ENCODE measurements at regions of chr11 and their contacts with region 1.

Region 1: GRCh38 chr11:67420646-67421420 is 5.4 kb downstream of the CARNS1 start:
- DNase-seq: peak; percentile 99
- ATAC-seq: peak; percentile 91
- H3K4me3 Mint-ChIP-seq: peak overlapping the region; percentile 82
- H3K27ac Mint-ChIP-seq: peak overlapping the region; percentile 84
- H3K4me1 Mint-ChIP-seq: peaks cover 48% of the 10 kb centered on the region
- H3K27me3 Mint-ChIP-seq: no peaks in the 10 kb centered on the region
- CTCF ChIP-seq: no peak

Region 2: DNA sequence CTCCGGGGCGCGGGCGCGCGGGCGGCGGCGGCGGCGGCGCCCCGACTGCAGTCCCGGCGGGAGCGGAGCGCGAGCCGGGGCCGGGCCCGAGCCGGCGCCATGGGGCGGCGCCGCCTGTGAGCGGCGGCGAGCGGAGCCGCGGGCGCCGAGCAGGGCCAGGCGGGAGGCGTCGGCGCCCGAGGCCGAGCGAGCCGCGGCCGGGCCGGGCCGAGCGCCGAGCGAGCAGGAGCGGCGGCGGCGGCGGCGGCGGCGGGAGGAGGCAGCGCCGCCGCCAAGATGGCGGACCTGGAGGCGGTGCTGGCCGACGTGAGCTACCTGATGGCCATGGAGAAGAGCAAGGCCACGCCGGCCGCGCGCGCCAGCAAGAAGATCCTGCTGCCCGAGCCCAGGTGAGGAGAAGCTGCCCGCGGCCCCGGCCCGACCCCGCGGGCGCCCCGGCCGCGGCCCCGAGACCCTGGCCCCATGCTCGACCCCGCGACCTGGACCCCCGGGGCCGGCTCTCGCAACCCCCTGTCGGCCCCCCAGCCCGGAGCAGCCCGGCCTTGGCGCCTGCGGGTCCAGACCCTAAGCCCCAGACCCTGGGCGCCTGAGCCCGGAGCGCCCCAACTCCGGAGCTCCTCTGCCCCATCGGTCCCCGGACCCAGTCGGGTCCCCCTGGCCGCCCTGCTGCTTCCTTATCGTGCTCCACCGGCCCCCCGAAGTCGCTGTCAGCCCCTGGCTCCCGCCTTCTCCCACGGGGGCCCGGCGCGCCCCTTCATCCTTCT is 154.2 kb before region 1 on chr11 and contains the start of gene GRK2:
- CTCF ChIA-PET with region 1: no interaction called
- POLR2A ChIA-PET with region 1: no interaction called
- intact Hi-C with region 1: no loop called
- DNase-seq: peak; percentile 57
- ATAC-seq: peak; percentile 21
- H3K4me3 Mint-ChIP-seq: peak within 1 kb of the TSS; percentile 90
- H3K27ac Mint-ChIP-seq: peak within 1 kb of the TSS; percentile 97
- H3K4me1 Mint-ChIP-seq: peaks cover 60% of the 10 kb centered on the region
- H3K27me3 Mint-ChIP-seq: no peaks in the 10 kb centered on the region
- CTCF ChIP-seq: no peak
- total RNA-seq, gene GRK2: 303 to 305 TPM

Region 3: GRCh38 chr11:67391304-67392132 is 29.3 kb before region 1 on chr11 and contains the start of gene RAD9A:
- CTCF ChIA-PET with region 1: no interaction called
- POLR2A ChIA-PET with region 1: interaction called, 13 read pairs
- intact Hi-C with region 1: no loop called
- DNase-seq: peak; percentile 96
- ATAC-seq: peak; percentile 77
- H3K4me3 Mint-ChIP-seq: peak within 1 kb of the TSS; percentile 92
- H3K27ac Mint-ChIP-seq: peak within 1 kb of the TSS; percentile 77
- H3K4me1 Mint-ChIP-seq: peaks cover 30% of the 10 kb centered on the region
- H3K27me3 Mint-ChIP-seq: no peaks in the 10 kb centered on the region
- CTCF ChIP-seq: no peak
- total RNA-seq, gene RAD9A: 29.7 to 30.6 TPM

Region 4: GRCh38 chr11:67409261-67409666 is 11.6 kb before region 1 on chr11:
- CTCF ChIA-PET with region 1: interaction called, 20 read pairs
- POLR2A ChIA-PET with region 1: interaction called, 93 read pairs
- intact Hi-C with region 1: no loop called
- DNase-seq: peak; percentile 88
- ATAC-seq: peak; percentile 63
- H3K4me3 Mint-ChIP-seq: peak overlapping the region; percentile 87
- H3K27ac Mint-ChIP-seq: peak overlapping the region; percentile 88
- H3K4me1 Mint-ChIP-seq: peaks cover 66% of the 10 kb centered on the region
- H3K27me3 Mint-ChIP-seq: no peaks in the 10 kb centered on the region
- CTCF ChIP-seq: no peak

Region 5: DNA sequence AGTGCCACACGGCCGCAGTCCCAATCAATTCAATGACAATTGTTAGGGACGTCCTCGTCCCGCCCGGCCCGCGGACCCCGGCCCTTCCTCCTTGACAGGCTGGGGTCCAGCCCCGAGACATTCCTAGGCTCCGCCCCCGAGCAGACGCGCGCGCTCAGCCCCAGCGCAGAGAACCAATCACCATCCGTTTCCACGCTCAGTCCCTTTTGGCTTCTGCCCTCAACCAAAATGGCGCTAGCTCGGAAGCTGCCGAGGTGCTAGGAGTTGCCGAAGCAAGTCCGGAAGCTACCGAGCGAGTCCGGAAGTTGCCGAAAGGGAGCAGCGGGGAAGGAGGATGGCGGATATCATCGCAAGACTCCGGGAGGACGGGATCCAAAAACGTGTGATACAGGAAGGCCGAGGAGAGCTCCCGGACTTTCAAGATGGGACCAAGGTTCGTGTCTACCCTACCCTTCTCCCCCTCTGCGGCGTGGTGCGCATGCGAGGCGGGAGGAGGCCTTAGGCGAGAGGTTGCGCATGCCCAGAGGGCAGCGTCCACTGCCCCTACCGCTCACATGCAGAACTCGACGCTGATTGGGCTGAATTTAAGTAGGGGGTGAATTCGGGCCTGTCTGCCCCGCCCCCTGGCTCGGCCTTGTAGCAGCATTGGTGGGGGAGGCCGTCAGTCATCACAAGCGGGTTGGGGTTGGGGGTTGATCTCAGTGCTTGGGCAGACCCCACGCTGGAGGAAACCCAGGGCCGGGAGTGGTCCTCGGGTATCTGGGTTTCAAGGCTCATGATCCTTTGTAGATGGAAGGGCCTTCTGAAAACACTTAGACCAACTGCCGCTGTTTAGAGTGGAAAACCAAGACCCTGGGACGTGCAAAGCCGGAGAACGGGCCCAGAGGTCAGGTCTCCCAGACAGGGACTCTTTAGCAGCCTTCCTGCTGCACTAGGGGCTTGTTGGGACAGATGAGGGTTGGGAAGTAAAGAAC is 62.3 kb after region 1 on chr11 and contains the start of gene AIP:
- CTCF ChIA-PET with region 1: no interaction called
- POLR2A ChIA-PET with region 1: interaction called, 37 read pairs
- intact Hi-C with region 1: no loop called
- DNase-seq: peak; percentile 99
- ATAC-seq: peak; percentile 68
- H3K4me3 Mint-ChIP-seq: peak within 1 kb of the TSS; percentile 79
- H3K27ac Mint-ChIP-seq: peak within 1 kb of the TSS; percentile 97
- H3K4me1 Mint-ChIP-seq: peaks cover 31% of the 10 kb centered on the region
- H3K27me3 Mint-ChIP-seq: no peaks in the 10 kb centered on the region
- CTCF ChIP-seq: no peak
- total RNA-seq, gene AIP: 145 to 146 TPM